Sciatic nerve (tissue), 2 donors: ENCODE measurements at regions of chr5 and their contacts with region 1.

Region 1: DNA sequence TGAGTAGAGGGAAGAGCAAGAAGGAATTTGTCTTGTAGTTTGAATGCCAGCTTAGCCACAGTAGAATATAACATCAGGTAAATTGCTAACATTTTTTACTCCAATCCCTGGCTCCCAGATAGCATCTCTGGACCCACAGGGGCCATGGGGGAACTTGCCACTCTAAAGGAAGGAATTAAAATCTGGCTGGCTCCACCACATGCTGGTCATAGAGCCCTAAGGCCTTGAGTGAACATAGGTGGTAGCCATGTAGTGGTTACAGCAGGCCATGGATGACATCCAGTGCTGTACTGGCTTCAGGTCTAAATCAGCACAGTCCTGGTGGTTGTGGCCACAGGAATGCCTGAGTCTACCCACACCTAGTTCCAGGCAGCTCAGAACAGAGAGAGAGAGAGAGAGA is 109.9 kb upstream of the RGMB start:
- DNase-seq: no peak
- ATAC-seq: no peak

Region 2: DNA sequence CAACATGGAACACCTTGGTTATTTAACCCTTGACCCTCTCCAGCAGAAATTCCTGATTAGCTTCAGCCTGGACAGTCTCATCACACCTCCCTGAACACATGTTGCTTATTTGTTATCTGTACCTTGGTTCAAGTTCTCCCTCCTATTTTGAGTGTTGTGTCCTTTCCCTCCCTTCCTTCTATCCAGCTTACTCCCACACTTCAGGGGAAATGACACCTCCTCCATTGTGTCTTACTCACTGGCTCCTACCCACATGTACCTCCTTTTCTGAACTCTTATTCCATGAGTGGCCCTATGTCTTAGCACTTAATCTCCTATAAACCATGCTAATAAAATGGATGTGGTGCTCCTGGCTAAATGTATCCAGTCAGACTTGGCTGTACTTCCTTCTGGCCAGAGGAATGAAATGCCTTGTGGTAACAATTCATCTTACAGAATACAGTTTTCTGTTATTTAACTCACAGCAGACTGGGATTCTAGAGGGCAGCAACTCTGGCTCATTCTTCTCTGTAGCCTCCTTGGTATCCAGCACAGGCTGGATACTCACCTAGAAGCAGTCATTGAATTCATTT is 1532.3 kb before region 1 on chr5:
- intact Hi-C with region 1: no loop called
- DNase-seq: no peak
- ATAC-seq: no peak

Region 3: GRCh38 chr5:98700730-98701129 is 37.2 kb after region 1 on chr5:
- intact Hi-C with region 1: no loop called
- DNase-seq: no peak
- ATAC-seq: no peak

Region 4: DNA sequence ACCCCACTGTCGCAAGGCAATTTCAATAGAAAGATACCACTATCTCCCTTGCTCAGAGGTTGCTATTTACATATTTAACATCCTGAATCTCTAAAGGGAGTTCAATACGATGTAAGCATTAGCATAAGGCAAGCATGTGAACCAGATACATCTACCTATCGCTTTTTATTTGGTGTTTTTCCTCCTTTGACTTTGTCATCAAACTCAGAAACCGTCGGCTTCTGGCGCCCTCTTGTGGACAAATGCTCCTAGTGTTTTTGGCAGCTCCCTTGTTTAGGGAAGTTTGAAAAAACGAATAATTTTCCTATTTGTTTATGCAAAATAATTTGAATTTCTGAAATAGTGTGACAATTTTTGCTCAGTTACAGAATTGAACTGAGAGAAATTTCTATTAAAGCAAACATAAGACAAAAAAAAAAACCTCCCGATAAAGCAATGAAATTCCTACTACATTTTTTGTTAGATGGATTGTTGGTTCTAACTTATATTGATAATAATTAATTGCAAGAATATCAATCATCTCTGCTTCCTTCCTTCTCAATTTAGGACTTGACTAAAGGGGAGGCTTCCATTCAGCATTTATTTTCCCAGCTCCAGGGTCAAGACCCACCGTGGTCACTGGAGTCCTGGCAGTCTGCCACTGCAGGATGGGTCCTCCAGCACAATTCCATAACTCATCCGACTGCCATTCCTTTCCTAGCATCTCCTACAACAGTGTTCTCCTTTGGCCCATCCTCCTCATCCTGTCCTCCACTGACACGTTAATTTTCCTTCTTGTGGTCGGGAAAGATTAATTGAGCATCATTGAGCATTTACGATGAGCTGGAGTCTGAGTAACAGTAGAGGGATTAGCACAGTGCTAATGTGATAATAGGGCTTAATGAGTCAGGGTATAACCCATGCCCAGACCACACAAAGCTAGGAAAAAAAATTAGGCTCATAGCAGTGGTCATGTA is 397.1 kb after region 1 on chr5:
- intact Hi-C with region 1: loop called (anchors 5 kb)
- DNase-seq: peak; percentile 90
- ATAC-seq: peak; percentile 60